ENCODE measurements at regions of chr3 and their contacts with region 1.

Region 1: GRCh38 chr3:63993653-63994079 is 29.6 kb downstream of the PSMD6 start:
- DNase-seq: peak; percentile 63 to 67 (median 66)
- H3K4me3 ChIP-seq: no peak overlapping the region
- H3K4me3 Mint-ChIP-seq: no peak overlapping the region
- H3K27ac ChIP-seq: no peak overlapping the region
- H3K27ac Mint-ChIP-seq: peak overlapping the region; percentile 7 to 89 (median 79)
- H3K4me1 ChIP-seq: peaks cover 7% of the 10 kb centered on the region
- H3K4me1 Mint-ChIP-seq: peaks cover 31 to 58% (median 43%) of the 10 kb centered on the region in 4 donors
- H3K27me3 ChIP-seq: no peaks in the 10 kb centered on the region
- H3K27me3 Mint-ChIP-seq: no peaks in the 10 kb centered on the region

Region 2: DNA sequence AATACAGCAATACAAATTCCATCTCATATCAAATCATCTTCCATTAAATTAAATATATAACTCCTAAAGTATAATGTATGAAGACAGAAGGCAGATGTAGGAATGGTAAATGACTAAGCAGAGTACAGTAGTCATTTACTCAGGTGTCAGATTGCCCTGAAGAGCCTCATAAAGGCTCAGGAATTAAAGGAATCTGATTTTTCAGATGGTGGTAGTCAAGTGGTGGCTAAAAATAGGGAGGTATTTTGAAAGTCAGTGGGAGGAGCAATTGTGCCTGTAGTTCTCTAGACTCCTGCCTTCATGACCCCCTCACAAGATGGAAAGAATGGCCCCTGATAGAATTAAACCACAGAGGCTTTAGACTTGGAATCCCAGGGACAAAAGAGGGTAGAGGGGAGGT is 858.3 kb before region 1 on chr3:
- CTCF ChIA-PET with region 1: no interaction called
- POLR2A ChIA-PET with region 1: no interaction called
- intact Hi-C with region 1: no loop called
- DNase-seq: no peak
- H3K4me3 ChIP-seq: no peak overlapping the region
- H3K4me3 Mint-ChIP-seq: peak overlapping the region in 1 of 8 donors; percentile 41
- H3K27ac ChIP-seq: no peak overlapping the region
- H3K27ac Mint-ChIP-seq: no peak overlapping the region
- H3K4me1 ChIP-seq: no peaks in the 10 kb centered on the region
- H3K4me1 Mint-ChIP-seq: no peaks in the 10 kb centered on the region
- H3K27me3 ChIP-seq: no peaks in the 10 kb centered on the region
- H3K27me3 Mint-ChIP-seq: no peaks in the 10 kb centered on the region

Region 3: GRCh38 chr3:63921741-63922482 is 71.8 kb before region 1 on chr3:
- CTCF ChIA-PET with region 1: no interaction called
- POLR2A ChIA-PET with region 1: no interaction called
- intact Hi-C with region 1: no loop called
- DNase-seq: no peak
- H3K4me3 ChIP-seq: no peak overlapping the region
- H3K4me3 Mint-ChIP-seq: no peak overlapping the region
- H3K27ac ChIP-seq: no peak overlapping the region
- H3K27ac Mint-ChIP-seq: peak overlapping the region in 1 of 7 donors; percentile 61
- H3K4me1 ChIP-seq: no peaks in the 10 kb centered on the region
- H3K4me1 Mint-ChIP-seq: peaks cover 21 to 55% (median 45%) of the 10 kb centered on the region in 4 donors
- H3K27me3 ChIP-seq: no peaks in the 10 kb centered on the region
- H3K27me3 Mint-ChIP-seq: no peaks in the 10 kb centered on the region

Region 4: GRCh38 chr3:63951492-63952247 is 42.0 kb before region 1 on chr3:
- CTCF ChIA-PET with region 1: interaction called, 875 read pairs
- POLR2A ChIA-PET with region 1: no interaction called
- intact Hi-C with region 1: no loop called
- DNase-seq: no peak
- H3K4me3 ChIP-seq: peak overlapping the region in 1 of 2 donors; percentile 17
- H3K4me3 Mint-ChIP-seq: peak overlapping the region; percentile 38 to 78 (median 62)
- H3K27ac ChIP-seq: peak overlapping the region; percentile 22
- H3K27ac Mint-ChIP-seq: peak overlapping the region; percentile 43 to 87 (median 72)
- H3K4me1 ChIP-seq: peaks cover 51% of the 10 kb centered on the region
- H3K4me1 Mint-ChIP-seq: peaks cover 37 to 63% (median 56%) of the 10 kb centered on the region in 4 donors
- H3K27me3 ChIP-seq: no peaks in the 10 kb centered on the region
- H3K27me3 Mint-ChIP-seq: no peaks in the 10 kb centered on the region

Region 5: DNA sequence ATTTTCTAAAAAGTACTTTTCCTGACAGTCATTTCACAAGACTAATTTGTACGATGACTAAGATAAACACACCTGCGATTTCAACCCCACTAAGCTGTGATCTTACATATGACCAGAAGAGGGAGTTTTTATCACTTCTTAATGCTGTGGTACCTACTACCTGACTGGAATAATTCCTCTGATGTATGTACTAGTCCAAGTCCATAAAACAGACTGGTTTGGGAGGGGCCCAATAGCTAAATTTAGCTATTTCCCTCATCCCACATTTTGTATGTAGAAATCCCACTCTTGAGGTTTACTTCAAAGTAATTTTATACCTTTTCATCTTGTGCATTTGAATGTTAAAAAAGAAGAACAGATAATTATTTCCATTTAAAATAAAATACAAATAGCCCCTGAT is 31.8 kb before region 1 on chr3:
- CTCF ChIA-PET with region 1: interaction called, 875 read pairs
- POLR2A ChIA-PET with region 1: interaction called, 36 read pairs
- intact Hi-C with region 1: loop called (anchors 1 kb)
- DNase-seq: peak in 4 of 5 donors; percentile 65 to 68 (median 66)
- H3K4me3 ChIP-seq: no peak overlapping the region
- H3K4me3 Mint-ChIP-seq: no peak overlapping the region
- H3K27ac ChIP-seq: no peak overlapping the region
- H3K27ac Mint-ChIP-seq: peak overlapping the region in 4 of 7 donors; percentile 32 to 74 (median 57)
- H3K4me1 ChIP-seq: peaks cover 33% of the 10 kb centered on the region
- H3K4me1 Mint-ChIP-seq: peaks cover 37 to 59% (median 47%) of the 10 kb centered on the region in 4 donors
- H3K27me3 ChIP-seq: no peaks in the 10 kb centered on the region
- H3K27me3 Mint-ChIP-seq: no peaks in the 10 kb centered on the region

Region 6: DNA sequence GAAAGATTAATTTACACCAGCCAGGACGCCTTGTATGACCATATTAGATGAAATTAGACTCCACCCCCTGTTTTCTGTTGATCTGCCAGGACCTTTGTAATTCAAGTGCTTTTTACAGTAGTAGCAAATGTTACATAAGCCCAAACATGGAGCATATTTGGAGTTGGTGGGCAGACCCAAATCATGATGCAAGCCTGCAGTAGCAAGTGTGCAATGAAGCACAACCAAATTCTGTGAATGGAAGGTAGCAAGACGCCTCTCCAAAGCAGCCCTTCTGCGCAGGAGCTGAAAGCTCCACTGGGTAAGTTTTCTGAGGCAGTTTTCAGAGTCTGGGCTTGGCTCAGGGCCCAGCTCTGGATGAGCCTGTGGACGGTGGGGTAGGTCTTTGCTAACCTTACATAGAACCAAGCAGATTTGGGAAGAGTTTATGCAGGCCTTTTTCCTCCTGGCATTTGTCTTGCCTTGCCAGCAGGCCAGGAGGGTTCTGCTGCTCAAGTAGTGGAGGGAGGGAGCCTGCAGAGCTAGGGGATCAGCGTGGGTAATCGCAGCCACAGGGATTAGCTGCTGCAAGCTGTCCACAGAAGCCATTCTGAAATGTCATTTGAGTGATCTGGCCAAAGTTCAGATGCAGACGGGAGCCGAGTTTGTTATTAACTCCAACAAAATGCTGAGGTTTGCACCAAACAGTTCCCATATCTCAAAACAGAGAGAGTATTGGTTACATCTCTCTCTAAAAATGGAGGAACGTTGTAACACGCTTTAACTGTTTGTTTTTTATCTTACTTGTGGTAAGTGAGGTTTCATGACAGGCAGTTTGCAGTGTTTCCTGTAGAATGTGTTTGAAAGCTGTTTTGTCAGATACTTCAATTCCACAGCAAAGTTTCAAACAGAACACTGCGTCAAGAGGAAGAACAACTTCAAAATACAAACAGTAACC is 25.7 kb before region 1 on chr3:
- CTCF ChIA-PET with region 1: interaction called, 875 read pairs
- POLR2A ChIA-PET with region 1: interaction called, 36 read pairs
- intact Hi-C with region 1: loop called (anchors 1 kb)
- DNase-seq: peak; percentile 71 to 89 (median 85)
- H3K4me3 ChIP-seq: peak overlapping the region; percentile 65 to 93
- H3K4me3 Mint-ChIP-seq: peak overlapping the region; percentile 89 to 96 (median 92)
- H3K27ac ChIP-seq: peak overlapping the region; percentile 69
- H3K27ac Mint-ChIP-seq: peak overlapping the region; percentile 84 to 98 (median 95)
- H3K4me1 ChIP-seq: peaks cover 69% of the 10 kb centered on the region
- H3K4me1 Mint-ChIP-seq: peaks cover 48 to 82% (median 62%) of the 10 kb centered on the region in 4 donors
- H3K27me3 ChIP-seq: no peaks in the 10 kb centered on the region
- H3K27me3 Mint-ChIP-seq: no peaks in the 10 kb centered on the region

Region 7: GRCh38 chr3:63975723-63976122 is 17.9 kb before region 1 on chr3:
- CTCF ChIA-PET with region 1: interaction called, 875 read pairs
- POLR2A ChIA-PET with region 1: interaction called, 17 read pairs
- intact Hi-C with region 1: loop called (anchors 1 kb)
- DNase-seq: no peak
- H3K4me3 ChIP-seq: no peak overlapping the region
- H3K4me3 Mint-ChIP-seq: peak overlapping the region in 7 of 8 donors; percentile 19 to 84 (median 53)
- H3K27ac ChIP-seq: no peak overlapping the region
- H3K27ac Mint-ChIP-seq: peak overlapping the region; percentile 68 to 91 (median 87)
- H3K4me1 ChIP-seq: peaks cover 97% of the 10 kb centered on the region
- H3K4me1 Mint-ChIP-seq: peaks cover 79 to 98% (median 90%) of the 10 kb centered on the region in 4 donors
- H3K27me3 ChIP-seq: no peaks in the 10 kb centered on the region
- H3K27me3 Mint-ChIP-seq: no peaks in the 10 kb centered on the region

Region 8: DNA sequence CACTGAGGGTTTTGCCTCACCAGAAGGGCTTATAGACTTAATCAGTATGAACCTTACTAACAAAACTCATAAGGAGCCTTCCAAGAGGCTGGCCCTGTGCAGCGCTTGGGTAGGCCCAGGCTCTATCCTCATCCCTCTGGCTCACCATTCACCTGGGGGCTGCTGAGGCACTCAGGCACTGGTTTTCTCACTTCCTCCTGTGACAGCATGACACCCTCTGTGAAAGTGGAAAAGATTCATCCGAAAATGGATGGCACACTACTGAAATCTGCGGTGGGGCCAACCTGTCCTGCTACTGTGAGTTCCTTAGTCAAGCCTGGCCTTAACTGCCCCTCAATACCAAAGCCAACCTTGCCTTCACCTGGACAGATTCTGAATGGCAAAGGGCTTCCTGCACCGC is 11.7 kb before region 1 on chr3:
- CTCF ChIA-PET with region 1: interaction called, 179 read pairs
- POLR2A ChIA-PET with region 1: interaction called, 17 read pairs
- intact Hi-C with region 1: loop called (anchors 1 kb)
- DNase-seq: no peak
- H3K4me3 ChIP-seq: no peak overlapping the region
- H3K4me3 Mint-ChIP-seq: peak overlapping the region in 7 of 8 donors; percentile 1 to 89 (median 38)
- H3K27ac ChIP-seq: peak overlapping the region; percentile 70
- H3K27ac Mint-ChIP-seq: peak overlapping the region; percentile 71 to 94 (median 88)
- H3K4me1 ChIP-seq: peaks cover 81% of the 10 kb centered on the region
- H3K4me1 Mint-ChIP-seq: peaks cover 66 to 93% (median 81%) of the 10 kb centered on the region in 4 donors
- H3K27me3 ChIP-seq: no peaks in the 10 kb centered on the region
- H3K27me3 Mint-ChIP-seq: no peaks in the 10 kb centered on the region

Region 9: GRCh38 chr3:64011685-64012084 is 18.0 kb after region 1 on chr3:
- CTCF ChIA-PET with region 1: interaction called, 27 read pairs
- POLR2A ChIA-PET with region 1: interaction called, 3 read pairs
- intact Hi-C with region 1: no loop called
- DNase-seq: no peak
- H3K4me3 ChIP-seq: no peak overlapping the region
- H3K4me3 Mint-ChIP-seq: no peak overlapping the region
- H3K27ac ChIP-seq: no peak overlapping the region
- H3K27ac Mint-ChIP-seq: peak overlapping the region in 4 of 7 donors; percentile 7 to 81 (median 54)
- H3K4me1 ChIP-seq: no peaks in the 10 kb centered on the region
- H3K4me1 Mint-ChIP-seq: peaks cover 18 to 27% (median 26%) of the 10 kb centered on the region in 4 donors
- H3K27me3 ChIP-seq: no peaks in the 10 kb centered on the region
- H3K27me3 Mint-ChIP-seq: no peaks in the 10 kb centered on the region

Measured in CD4-positive, alpha-beta memory T cell (primary cell).